Heart right ventricle (tissue), 16 donors: ENCODE measurements at regions of chr11 and their contacts with region 1.

Region 1: GRCh38 chr11:13837286-13837685 is 125.2 kb upstream of the SPON1 start:
- DNase-seq: no peak
- ATAC-seq: no peak
- H3K4me3 ChIP-seq: no peak overlapping the region
- H3K27ac ChIP-seq: no peak overlapping the region
- H3K4me1 ChIP-seq: no peaks in the 10 kb centered on the region
- H3K27me3 ChIP-seq: peaks cover 0 to 3% (median 0%) of the 10 kb centered on the region in 7 donors
- CTCF ChIP-seq: no peak

Region 2: GRCh38 chr11:13668102-13668956 is 169.0 kb before region 1 on chr11 and contains the start of gene FAR1:
- intact Hi-C with region 1: no loop called
- DNase-seq: peak; percentile 98
- ATAC-seq: peak; percentile 97 to 100 (median 99)
- H3K4me3 ChIP-seq: peak within 1 kb of the TSS; percentile 70 to 98 (median 87)
- H3K27ac ChIP-seq: peak within 1 kb of the TSS; percentile 49 to 96 (median 89)
- H3K4me1 ChIP-seq: peaks cover 0 to 49% (median 26%) of the 10 kb centered on the region in 9 donors
- H3K27me3 ChIP-seq: no peaks in the 10 kb centered on the region
- CTCF ChIP-seq: peak in 8 of 9 donors; percentile 53 to 87 (median 74)
- total RNA-seq, gene FAR1: 28.4 to 45.9 (median 38.8) TPM

Region 3: DNA sequence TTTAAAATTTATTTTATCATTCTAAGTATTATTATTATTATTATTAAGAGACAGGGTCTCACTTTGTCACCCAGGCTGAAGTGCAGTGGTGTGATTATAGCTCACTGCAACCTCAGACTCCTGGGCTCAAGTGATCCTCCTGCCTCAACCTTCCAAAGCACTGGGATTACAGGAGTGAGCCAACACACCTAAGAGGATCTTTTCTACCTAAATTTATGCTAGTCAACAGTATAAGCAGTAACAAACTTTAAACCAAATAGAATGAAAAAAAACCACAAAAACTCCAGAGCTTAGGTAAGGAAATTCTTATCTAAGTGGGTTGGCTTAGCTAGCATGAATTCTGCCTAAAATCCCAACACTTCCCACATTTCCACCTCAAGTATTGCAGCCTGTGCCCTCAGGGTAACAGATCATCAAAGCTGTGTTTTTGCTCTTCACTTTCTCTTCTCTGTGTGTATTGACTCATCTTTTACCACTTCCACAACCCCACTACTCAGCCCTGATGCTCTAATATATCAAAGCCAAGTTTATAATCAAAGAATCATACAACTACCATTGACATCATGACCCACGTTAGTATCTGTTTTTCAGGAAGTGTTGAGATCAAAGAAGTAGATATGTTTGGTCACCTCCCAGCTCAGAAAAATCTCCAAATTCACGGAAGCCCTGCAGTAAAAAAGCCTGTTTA is 31.6 kb after region 1 on chr11:
- intact Hi-C with region 1: loop called in 1 of 10 experiments (anchors 1 kb)
- DNase-seq: no peak
- ATAC-seq: no peak
- H3K4me3 ChIP-seq: no peak overlapping the region
- H3K27ac ChIP-seq: no peak overlapping the region
- H3K4me1 ChIP-seq: peaks cover 0 to 11% (median 8%) of the 10 kb centered on the region in 9 donors
- H3K27me3 ChIP-seq: peaks cover 0 to 3% (median 0%) of the 10 kb centered on the region in 7 donors
- CTCF ChIP-seq: no peak